ENCODE measurements at regions of chr4 and their contacts with region 1.

Region 1: GRCh38 chr4:95095348-95095974 is 337.7 kb downstream of the BMPR1B start:
- DNase-seq: no peak
- ATAC-seq: peak in 1 of 2 donors; percentile 26

Region 2: DNA sequence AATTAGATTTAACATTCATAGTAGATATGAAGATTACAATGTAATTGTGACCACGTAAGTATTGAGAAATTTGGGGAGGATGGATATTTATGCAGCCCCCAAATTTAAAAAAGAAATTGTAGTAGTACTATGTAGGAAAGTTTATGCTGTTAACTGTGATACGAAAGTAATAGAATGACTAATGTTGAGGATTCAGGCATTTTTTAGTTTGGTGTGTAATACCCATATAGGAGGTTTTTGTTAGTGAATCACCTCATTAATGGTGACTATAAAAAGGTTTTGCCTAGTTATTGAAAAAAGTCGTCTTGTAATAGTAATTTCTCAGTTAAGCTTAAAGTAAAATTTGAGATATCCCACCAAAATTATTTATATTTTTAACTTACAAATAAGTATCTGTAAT is 820.5 kb before region 1 on chr4:
- intact Hi-C with region 1: no loop called
- DNase-seq: no peak
- ATAC-seq: no peak

Region 3: DNA sequence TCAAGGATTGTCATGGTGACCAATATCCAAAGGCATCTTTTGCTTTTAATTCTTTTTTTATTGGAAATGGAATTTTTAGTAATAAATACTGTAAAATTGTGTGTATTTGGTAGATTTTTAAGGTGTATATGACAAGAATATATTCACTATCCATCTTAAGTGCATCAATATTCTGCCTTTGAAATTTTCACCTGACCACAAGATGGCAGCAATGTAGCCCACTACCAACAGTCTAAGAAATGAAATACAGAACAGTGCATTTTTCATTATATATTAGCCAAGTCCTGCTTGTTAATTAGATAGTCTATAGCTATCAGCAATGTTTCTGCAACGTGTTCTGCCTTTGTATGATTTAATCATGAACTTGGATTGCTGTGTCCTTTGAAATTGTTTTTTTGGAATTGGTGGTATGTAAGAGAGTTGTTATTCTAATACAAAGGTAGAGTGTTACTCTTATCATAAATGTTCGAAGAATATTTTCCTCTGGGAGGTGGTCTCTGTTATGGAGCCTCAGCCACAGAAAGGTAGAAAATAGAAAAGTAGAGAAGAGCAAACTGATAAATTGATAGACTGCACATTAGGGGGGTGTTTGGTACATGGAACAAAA is 791.0 kb before region 1 on chr4:
- intact Hi-C with region 1: loop called in 1 of 2 experiments (anchors 10 kb)
- DNase-seq: no peak
- ATAC-seq: peak in 1 of 2 donors; percentile 48